Thyroid gland (tissue), 4 donors: ENCODE measurements at regions of chr1 and their contacts with region 1.

Region 1: DNA sequence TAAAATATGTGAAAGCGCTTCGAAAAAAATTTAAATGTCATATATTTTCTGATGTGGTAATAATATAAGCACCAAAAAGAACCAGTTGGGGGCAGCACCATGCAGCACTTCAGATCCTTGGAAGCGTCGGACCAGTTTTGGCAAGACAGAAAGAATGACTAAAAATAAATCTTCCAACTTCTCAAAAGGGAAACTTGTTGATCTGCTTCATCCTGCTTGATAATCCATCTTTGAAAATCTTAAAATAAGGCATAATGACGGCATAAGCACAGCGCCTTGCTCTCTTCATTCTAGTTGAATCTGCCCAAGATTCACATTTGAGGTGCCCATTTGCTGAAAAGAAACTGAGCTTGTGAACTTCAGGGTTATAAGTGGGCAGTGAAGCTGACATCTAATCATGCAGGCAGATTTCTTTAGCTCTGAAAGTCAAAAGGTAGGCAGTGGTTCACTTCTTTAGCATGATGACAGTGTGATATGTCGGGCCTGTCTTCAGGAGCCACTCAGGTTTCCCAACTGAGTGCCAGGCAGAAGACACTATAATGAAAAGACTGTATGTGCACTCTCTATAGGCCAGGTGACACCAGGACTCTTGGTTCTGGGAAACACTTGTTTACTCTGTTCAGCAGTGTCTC is 19.8 kb upstream of the MUTYH start:
- DNase-seq: peak; percentile 68 to 77
- H3K4me3 ChIP-seq: no peak overlapping the region
- H3K27ac ChIP-seq: peak overlapping the region; percentile 64 to 74 (median 72)
- H3K4me1 ChIP-seq: peaks cover 7 to 14% of the 10 kb centered on the region in 2 donors
- H3K27me3 ChIP-seq: no peaks in the 10 kb centered on the region
- CTCF ChIP-seq: peak; percentile 21 to 77 (median 70)
- POLR2A ChIP-seq: no peak

Region 2: DNA sequence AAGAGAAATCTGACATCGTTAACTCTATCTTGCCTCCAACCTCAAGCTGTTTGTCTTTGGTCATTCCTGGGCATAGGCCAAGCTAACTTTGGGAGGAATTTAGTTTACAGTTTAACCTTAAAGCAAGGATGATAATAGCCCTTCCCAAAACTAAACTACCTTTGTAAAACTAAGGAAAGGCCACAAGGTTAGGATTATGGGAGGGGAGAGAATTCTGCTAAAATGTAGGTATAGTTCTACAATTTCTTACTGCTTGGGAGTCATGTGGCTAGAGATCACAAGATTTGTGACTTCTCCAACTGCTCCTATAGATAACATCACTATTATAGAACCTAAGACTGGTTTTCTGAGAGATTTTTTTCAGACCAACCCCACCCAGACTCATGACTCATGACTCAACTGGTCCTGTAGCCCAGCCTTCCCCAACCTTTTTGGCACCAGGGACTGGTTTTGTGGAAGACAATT is 50.9 kb after region 1 on chr1:
- intact Hi-C with region 1: no loop called
- DNase-seq: no peak
- H3K4me3 ChIP-seq: no peak overlapping the region
- H3K27ac ChIP-seq: no peak overlapping the region
- H3K4me1 ChIP-seq: no peaks in the 10 kb centered on the region
- H3K27me3 ChIP-seq: no peaks in the 10 kb centered on the region
- CTCF ChIP-seq: no peak
- POLR2A ChIP-seq: no peak

Region 3: GRCh38 chr1:45490626-45491486 is 130.9 kb after region 1 on chr1 and contains the start of gene TESK2:
- intact Hi-C with region 1: loop called (anchors 2 kb)
- DNase-seq: peak; percentile 98
- H3K4me3 ChIP-seq: peak within 1 kb of the TSS; percentile 63 to 71 (median 70)
- H3K27ac ChIP-seq: peak within 1 kb of the TSS; percentile 41 to 73 (median 58)
- H3K4me1 ChIP-seq: peaks cover 0 to 5% of the 10 kb centered on the region in 2 donors
- H3K27me3 ChIP-seq: no peaks in the 10 kb centered on the region
- CTCF ChIP-seq: peak in 2 of 6 experiments; percentile 3 to 46
- POLR2A ChIP-seq: peak in 1 of 2 donors; percentile 98
- total RNA-seq, gene TESK2: 4.8 to 5.7 (median 5.5) TPM

Region 4: DNA sequence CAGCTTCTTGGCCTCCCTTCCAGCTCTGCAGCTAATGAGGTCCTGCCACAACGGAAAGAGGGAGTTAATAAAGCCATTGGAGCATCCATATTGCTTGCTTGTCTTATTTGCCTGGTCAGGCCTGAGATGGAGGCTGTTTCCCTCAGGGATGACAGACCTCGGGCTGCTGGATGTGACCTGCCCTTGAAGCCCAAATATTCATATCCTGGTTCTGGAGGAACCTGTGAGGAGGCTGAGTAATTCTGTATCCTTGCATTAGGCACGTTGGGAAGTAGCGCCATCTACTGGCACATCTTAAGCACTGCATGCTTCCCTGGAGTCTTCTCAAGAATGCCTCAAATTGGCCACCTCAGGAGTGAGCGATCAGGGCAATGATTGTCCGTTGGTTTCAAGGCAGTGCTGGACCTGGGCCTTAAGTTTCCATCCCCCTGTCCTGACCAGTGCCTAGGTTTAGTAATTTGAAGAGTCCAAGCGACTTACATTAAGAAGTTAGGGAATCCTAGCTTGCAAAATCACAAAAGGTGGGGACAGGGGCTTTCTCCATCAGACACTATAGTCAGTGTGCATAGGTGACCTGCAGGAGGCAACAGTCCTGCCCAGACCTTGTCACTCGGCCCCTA is 210.1 kb after region 1 on chr1:
- intact Hi-C with region 1: loop called (anchors 5 kb)
- DNase-seq: peak; percentile 76 to 79
- H3K4me3 ChIP-seq: no peak overlapping the region
- H3K27ac ChIP-seq: no peak overlapping the region
- H3K4me1 ChIP-seq: no peaks in the 10 kb centered on the region
- H3K27me3 ChIP-seq: no peaks in the 10 kb centered on the region
- CTCF ChIP-seq: peak; percentile 95 to 98 (median 96)
- POLR2A ChIP-seq: no peak